OCI-LY7 (cell line): ENCODE measurements at regions of chr7 and their contacts with region 1.

Region 1: GRCh38 chr7:108181073-108181985 is 51.2 kb upstream of the LAMB4 start:
- DNase-seq: peak; percentile 45
- H3K4me3 ChIP-seq: no peak overlapping the region
- H3K27ac ChIP-seq: no peak overlapping the region
- H3K4me1 ChIP-seq: no peaks in the 10 kb centered on the region
- CTCF ChIP-seq: peak; percentile 94

Region 2: GRCh38 chr7:108196004-108196403 is 14.7 kb after region 1 on chr7:
- CTCF ChIA-PET with region 1: no interaction called
- POLR2A ChIA-PET with region 1: no interaction called
- intact Hi-C with region 1: no loop called
- DNase-seq: no peak
- H3K4me3 ChIP-seq: no peak overlapping the region
- H3K27ac ChIP-seq: no peak overlapping the region
- H3K4me1 ChIP-seq: no peaks in the 10 kb centered on the region
- CTCF ChIP-seq: no peak

Region 3: DNA sequence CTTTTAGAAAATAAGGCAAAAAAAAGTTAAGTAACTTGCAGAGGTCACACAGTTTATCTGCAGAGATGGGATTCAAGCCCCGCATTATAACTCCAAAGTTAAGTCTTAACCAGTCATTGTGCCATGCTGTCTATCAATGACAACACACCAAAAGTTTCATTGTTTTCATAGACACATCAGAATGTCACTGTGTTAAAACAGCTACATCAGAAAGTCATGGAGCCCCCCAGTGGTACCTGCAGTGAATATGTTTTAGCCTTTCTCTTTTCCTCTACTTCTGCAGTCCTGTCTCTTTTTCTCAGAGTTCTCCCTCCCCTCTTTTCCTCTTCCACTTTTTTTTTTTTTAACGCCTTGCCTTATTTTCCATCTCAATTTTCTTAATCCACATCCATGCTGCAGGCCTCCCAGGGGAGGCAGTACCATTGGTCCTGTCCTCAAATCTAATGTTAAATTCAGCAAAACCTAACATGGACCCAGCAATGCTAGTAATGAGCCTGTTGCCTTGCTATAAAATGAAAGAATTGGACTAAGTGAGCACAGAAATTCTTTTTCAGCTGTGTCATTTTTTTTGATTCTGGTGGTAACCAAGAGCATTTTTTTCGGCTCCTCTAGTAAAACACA is 278.7 kb after region 1 on chr7:
- CTCF ChIA-PET with region 1: no interaction called
- POLR2A ChIA-PET with region 1: no interaction called
- intact Hi-C with region 1: loop called (anchors 2 kb)
- DNase-seq: peak; percentile 46
- H3K4me3 ChIP-seq: no peak overlapping the region
- H3K27ac ChIP-seq: no peak overlapping the region
- H3K4me1 ChIP-seq: no peaks in the 10 kb centered on the region
- CTCF ChIP-seq: peak; percentile 81

Region 4: GRCh38 chr7:108497082-108497725 is 315.9 kb after region 1 on chr7:
- CTCF ChIA-PET with region 1: no interaction called
- POLR2A ChIA-PET with region 1: interaction called, 3 read pairs
- intact Hi-C with region 1: loop called (anchors 1 kb)
- DNase-seq: peak; percentile 77
- H3K4me3 ChIP-seq: no peak overlapping the region
- H3K27ac ChIP-seq: no peak overlapping the region
- H3K4me1 ChIP-seq: peaks cover 7% of the 10 kb centered on the region
- CTCF ChIP-seq: peak; percentile 97

Region 5: GRCh38 chr7:108592646-108593201 is 411.4 kb after region 1 on chr7:
- CTCF ChIA-PET with region 1: no interaction called
- POLR2A ChIA-PET with region 1: no interaction called
- intact Hi-C with region 1: loop called (anchors 10 kb)
- DNase-seq: peak; percentile 35
- H3K4me3 ChIP-seq: no peak overlapping the region
- H3K27ac ChIP-seq: no peak overlapping the region
- H3K4me1 ChIP-seq: no peaks in the 10 kb centered on the region
- CTCF ChIP-seq: peak; percentile 62